PC-9 (cell line): ENCODE measurements at regions of chr9 and their contacts with region 1.

Region 1: GRCh38 chr9:16985559-16986348 is 115.3 kb upstream of the BNC2 start:
- DNase-seq: no peak
- H3K4me3 ChIP-seq: no peak overlapping the region
- H3K27ac ChIP-seq: no peak overlapping the region
- H3K4me1 ChIP-seq: no peaks in the 10 kb centered on the region
- H3K27me3 ChIP-seq: no peaks in the 10 kb centered on the region
- CTCF ChIP-seq: no peak

Region 2: GRCh38 chr9:16012621-16013020 is 973.1 kb before region 1 on chr9:
- CTCF ChIA-PET with region 1: no interaction called
- POLR2A ChIA-PET with region 1: no interaction called
- intact Hi-C with region 1: no loop called
- DNase-seq: no peak
- H3K4me3 ChIP-seq: no peak overlapping the region
- H3K27ac ChIP-seq: no peak overlapping the region
- H3K4me1 ChIP-seq: no peaks in the 10 kb centered on the region
- H3K27me3 ChIP-seq: no peaks in the 10 kb centered on the region
- CTCF ChIP-seq: no peak

Region 3: GRCh38 chr9:17236147-17236546 is 250.4 kb after region 1 on chr9:
- CTCF ChIA-PET with region 1: no interaction called
- POLR2A ChIA-PET with region 1: interaction called, 22 read pairs
- intact Hi-C with region 1: no loop called
- DNase-seq: no peak
- H3K4me3 ChIP-seq: no peak overlapping the region
- H3K27ac ChIP-seq: no peak overlapping the region
- H3K4me1 ChIP-seq: no peaks in the 10 kb centered on the region
- H3K27me3 ChIP-seq: no peaks in the 10 kb centered on the region
- CTCF ChIP-seq: no peak